Sigmoid colon (tissue), 7 donors: ENCODE measurements at regions of chr1 and their contacts with region 1.

Region 1: DNA sequence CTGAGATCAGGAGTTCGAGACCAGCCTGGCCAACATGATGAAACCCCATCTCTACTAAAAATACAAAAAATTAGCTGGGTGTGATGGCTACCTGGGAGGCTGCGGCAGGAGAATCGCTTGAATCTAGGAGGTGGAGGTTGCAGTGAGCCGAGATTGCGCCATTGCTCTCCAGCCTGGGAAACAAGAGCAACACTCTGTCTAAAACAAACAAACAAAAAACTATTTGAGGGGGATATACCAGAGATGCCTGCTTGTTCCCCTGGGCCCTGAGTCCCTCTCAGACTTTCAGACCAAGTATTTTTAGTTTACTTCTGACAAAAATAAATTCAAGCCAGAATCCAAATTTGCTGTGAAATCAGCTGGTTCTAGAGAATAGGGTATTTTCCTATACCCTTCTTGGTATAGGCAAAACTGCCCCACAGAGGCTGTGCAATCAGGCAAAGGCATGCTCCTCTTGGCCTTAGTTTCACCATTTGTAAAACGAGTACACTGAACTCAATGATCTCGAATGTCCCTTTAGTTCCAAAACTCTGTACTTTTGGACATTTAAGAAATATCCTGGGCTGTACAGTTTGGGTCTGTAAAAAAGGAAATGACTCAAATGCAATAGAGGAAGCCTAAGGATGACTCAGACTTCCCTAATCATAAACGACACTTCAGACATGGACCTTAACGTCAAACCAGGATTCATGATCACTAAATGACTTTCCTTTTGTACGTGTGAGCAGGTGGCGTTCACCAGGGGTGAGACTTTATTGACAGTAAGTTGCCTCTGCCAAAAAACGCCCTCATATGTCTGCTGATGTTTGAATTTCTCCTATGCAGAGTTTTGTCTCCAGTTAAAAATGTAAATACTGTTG is 16.1 kb downstream of the ENSA start:
- DNase-seq: no peak
- H3K4me3 ChIP-seq: no peak overlapping the region
- H3K27ac ChIP-seq: peak overlapping the region; percentile 69 to 80 (median 75)
- H3K4me1 ChIP-seq: peaks cover 0 to 58% (median 51%) of the 10 kb centered on the region in 4 donors
- H3K27me3 ChIP-seq: no peaks in the 10 kb centered on the region
- CTCF ChIP-seq: no peak
- EP300 ChIP-seq: peak in 3 of 4 donors; percentile 47 to 88 (median 86)
- POLR2A ChIP-seq: peak in 1 of 2 donors; percentile 7

Region 2: GRCh38 chr1:150578965-150579798 is 34.1 kb before region 1 on chr1 and contains the start of gene MCL1:
- intact Hi-C with region 1: loop called (anchors 5 kb)
- DNase-seq: peak; percentile 98
- H3K4me3 ChIP-seq: peak within 1 kb of the TSS; percentile 77 to 98 (median 94)
- H3K27ac ChIP-seq: peak within 1 kb of the TSS; percentile 95 to 99 (median 97)
- H3K4me1 ChIP-seq: peaks cover 4 to 46% (median 32%) of the 10 kb centered on the region in 4 donors
- H3K27me3 ChIP-seq: no peaks in the 10 kb centered on the region
- CTCF ChIP-seq: no peak
- EP300 ChIP-seq: peak in 2 of 4 donors; percentile 11 to 44
- POLR2A ChIP-seq: peak; percentile 97 to 98
- total RNA-seq, gene MCL1: 159 to 352 (median 212) TPM

Region 3: GRCh38 chr1:150661156-150661555 is 47.9 kb after region 1 on chr1:
- intact Hi-C with region 1: no loop called
- DNase-seq: no peak
- H3K4me3 ChIP-seq: no peak overlapping the region
- H3K27ac ChIP-seq: no peak overlapping the region
- H3K4me1 ChIP-seq: no peaks in the 10 kb centered on the region
- H3K27me3 ChIP-seq: no peaks in the 10 kb centered on the region
- CTCF ChIP-seq: no peak
- EP300 ChIP-seq: no peak
- POLR2A ChIP-seq: no peak

Region 4: DNA sequence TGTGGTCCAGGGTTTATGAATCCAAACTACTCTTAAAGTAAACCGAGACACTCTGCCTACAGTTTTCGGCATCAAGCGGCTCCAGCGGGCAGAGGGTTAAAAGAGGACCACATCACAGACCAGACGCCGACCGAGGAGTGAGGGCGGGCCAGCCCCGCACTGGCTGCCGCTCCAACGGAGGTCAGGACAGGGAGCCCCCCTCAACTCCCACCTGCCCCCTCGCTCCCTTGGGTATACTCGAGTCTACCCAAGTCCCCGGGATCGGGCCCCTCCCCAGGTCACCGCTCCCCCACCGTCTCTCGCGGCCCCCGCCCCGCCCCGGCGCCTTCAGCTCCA is 262.8 kb after region 1 on chr1:
- intact Hi-C with region 1: no loop called
- DNase-seq: no peak
- H3K4me3 ChIP-seq: peak overlapping the region; percentile 71 to 100 (median 91)
- H3K27ac ChIP-seq: peak overlapping the region; percentile 92 to 100 (median 96)
- H3K4me1 ChIP-seq: peaks cover 0 to 25% (median 16%) of the 10 kb centered on the region in 4 donors
- H3K27me3 ChIP-seq: no peaks in the 10 kb centered on the region
- CTCF ChIP-seq: no peak
- EP300 ChIP-seq: no peak
- POLR2A ChIP-seq: no peak

Region 5: DNA sequence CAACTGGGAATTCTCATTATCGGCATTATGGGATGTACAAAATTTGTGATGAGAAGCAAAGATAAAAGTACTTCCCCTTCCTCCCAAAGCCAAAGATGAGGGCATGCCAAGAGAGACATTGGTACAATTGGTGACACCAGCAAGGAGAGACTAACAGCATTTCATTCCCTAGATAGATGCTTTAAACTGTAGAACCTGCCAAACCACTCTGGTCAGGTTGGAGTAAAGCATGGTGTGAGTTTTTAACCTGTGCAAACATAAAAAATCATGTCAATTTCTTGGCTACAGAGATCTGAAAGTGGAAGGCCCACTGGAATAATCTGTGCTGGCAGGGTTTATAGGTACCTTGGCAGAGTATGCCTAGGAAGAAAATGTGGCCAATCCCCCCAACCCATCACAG is 293.1 kb after region 1 on chr1:
- intact Hi-C with region 1: no loop called
- DNase-seq: no peak
- H3K4me3 ChIP-seq: no peak overlapping the region
- H3K27ac ChIP-seq: no peak overlapping the region
- H3K4me1 ChIP-seq: no peaks in the 10 kb centered on the region
- H3K27me3 ChIP-seq: no peaks in the 10 kb centered on the region
- CTCF ChIP-seq: no peak
- EP300 ChIP-seq: no peak
- POLR2A ChIP-seq: no peak